SK-MEL-5 (cell line): ENCODE measurements at regions of chr11 and their contacts with region 1.

Region 1: GRCh38 chr11:36292311-36292722 is 3.1 kb upstream of the COMMD9 start:
- DNase-seq: peak; percentile 67

Region 2: DNA sequence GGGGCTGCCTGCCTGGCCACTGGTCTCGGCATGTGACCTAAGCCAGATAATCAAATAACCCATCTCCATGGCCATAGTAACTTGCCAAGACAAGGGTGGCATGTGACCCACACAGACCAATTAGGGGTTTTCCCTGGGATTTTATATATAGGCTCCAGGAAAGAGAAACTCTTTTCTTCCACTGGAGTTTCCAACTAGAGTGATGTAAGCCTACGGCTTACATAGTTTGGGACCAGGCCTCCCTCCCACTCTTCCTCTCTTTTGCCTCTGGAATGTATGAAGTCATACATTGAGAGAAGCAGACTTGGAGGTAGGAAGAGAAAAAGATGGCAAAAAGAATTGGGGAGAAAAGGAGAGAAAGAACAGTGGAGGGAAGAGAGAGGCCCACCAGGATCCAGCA is 433.0 kb before region 1 on chr11:
- in situ Hi-C with region 1: no loop called
- DNase-seq: no peak

Region 3: DNA sequence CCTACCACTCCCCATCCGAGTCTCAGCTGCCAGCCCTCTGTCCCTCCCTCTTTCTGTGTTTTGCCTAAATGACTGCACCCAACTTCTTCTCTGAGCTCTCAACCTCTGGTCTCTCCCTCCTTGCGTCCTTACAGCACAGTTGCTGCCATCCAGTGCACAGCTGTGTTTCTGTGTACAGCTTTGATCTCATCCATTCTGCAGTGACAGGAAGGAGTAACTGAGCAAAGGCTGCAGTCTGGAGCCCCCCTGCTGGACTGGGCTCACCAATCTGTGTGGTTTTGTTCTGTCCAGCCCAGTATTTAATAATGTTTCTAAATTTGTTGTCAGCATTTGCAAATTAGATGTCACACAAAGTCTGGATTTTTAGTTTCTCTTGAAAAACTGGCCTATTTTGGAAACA is 47.6 kb after region 1 on chr11:
- in situ Hi-C with region 1: loop called (anchors 5 kb)
- DNase-seq: no peak

Region 4: GRCh38 chr11:36488096-36488495 is 195.8 kb after region 1 on chr11:
- in situ Hi-C with region 1: loop called (anchors 10 kb)
- DNase-seq: no peak